MCF 10A (cell line): ENCODE measurements at regions of chr1 and their contacts with region 1.

Region 1: DNA sequence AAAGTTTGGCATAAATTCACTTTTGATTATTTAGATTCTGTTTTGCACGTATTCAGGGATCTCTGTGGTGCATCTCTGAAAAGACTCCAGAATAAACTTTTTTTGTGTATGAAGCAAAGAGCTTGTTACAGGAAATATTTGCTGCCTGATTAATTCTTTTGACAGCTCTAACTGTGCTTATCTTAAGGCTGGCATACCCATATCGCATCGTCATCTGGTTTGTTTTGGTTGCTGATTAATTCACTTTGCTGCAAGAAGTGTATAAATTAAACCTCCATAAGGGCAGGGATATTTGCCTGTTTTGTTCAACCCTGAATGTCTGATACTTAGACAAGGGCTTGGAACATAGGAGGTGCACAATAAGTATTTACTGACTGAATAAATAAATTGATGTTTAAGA is 17.5 kb upstream of the DUSP10 start:
- DNase-seq: no peak
- H3K4me3 Mint-ChIP-seq: no peak overlapping the region
- H3K27ac Mint-ChIP-seq: no peak overlapping the region
- H3K4me1 Mint-ChIP-seq: peaks cover 17% of the 10 kb centered on the region
- H3K27me3 Mint-ChIP-seq: no peaks in the 10 kb centered on the region
- CTCF ChIP-seq: no peak

Region 2: GRCh38 chr1:221801773-221802516 is 42.5 kb after region 1 on chr1:
- CTCF ChIA-PET with region 1: interaction called, 4 read pairs
- POLR2A ChIA-PET with region 1: interaction called, 10 read pairs
- intact Hi-C with region 1: no loop called
- DNase-seq: peak; percentile 87
- H3K4me3 Mint-ChIP-seq: no peak overlapping the region
- H3K27ac Mint-ChIP-seq: peak overlapping the region; percentile 63
- H3K4me1 Mint-ChIP-seq: peaks cover 18% of the 10 kb centered on the region
- H3K27me3 Mint-ChIP-seq: no peaks in the 10 kb centered on the region
- CTCF ChIP-seq: no peak